PC-3 (cell line): ENCODE measurements at regions of chr13 and their contacts with region 1.

Region 1: DNA sequence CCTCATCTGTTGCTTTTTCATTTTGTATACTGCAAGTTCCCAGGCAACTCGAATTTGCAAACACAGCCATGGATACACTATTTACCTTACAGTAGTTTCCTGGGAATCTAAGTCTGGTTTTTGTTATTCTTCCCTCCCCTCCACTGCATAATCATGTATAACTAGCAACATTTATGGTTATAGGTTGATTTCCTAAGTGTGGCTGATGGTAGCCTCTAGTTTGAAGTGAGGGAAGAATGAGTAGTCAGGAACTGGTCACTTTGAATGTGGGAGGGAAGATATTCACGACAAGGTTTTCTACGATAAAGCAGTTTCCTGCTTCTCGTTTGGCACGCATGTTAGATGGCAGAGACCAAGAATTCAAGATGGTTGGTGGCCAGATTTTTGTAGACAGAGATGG is at the start of gene KCNRG:
- DNase-seq: no peak
- ATAC-seq: no peak
- H3K4me3 ChIP-seq: no peak within 1 kb of the TSS
- H3K27ac ChIP-seq: no peak within 1 kb of the TSS
- H3K4me1 ChIP-seq: no peaks in the 10 kb centered on the region
- H3K27me3 ChIP-seq: no peaks in the 10 kb centered on the region
- CTCF ChIP-seq: no peak
- total RNA-seq, gene KCNRG: 0.15 and 2.4 TPM in 2 replicates

Region 2: GRCh38 chr13:48050550-48050949 is 1964.7 kb before region 1 on chr13:
- CTCF ChIA-PET with region 1: no interaction called
- POLR2A ChIA-PET with region 1: no interaction called
- intact Hi-C with region 1: no loop called
- DNase-seq: no peak
- ATAC-seq: no peak
- H3K4me3 ChIP-seq: no peak overlapping the region
- H3K27ac ChIP-seq: no peak overlapping the region
- H3K4me1 ChIP-seq: no peaks in the 10 kb centered on the region
- H3K27me3 ChIP-seq: no peaks in the 10 kb centered on the region
- CTCF ChIP-seq: no peak

Region 3: DNA sequence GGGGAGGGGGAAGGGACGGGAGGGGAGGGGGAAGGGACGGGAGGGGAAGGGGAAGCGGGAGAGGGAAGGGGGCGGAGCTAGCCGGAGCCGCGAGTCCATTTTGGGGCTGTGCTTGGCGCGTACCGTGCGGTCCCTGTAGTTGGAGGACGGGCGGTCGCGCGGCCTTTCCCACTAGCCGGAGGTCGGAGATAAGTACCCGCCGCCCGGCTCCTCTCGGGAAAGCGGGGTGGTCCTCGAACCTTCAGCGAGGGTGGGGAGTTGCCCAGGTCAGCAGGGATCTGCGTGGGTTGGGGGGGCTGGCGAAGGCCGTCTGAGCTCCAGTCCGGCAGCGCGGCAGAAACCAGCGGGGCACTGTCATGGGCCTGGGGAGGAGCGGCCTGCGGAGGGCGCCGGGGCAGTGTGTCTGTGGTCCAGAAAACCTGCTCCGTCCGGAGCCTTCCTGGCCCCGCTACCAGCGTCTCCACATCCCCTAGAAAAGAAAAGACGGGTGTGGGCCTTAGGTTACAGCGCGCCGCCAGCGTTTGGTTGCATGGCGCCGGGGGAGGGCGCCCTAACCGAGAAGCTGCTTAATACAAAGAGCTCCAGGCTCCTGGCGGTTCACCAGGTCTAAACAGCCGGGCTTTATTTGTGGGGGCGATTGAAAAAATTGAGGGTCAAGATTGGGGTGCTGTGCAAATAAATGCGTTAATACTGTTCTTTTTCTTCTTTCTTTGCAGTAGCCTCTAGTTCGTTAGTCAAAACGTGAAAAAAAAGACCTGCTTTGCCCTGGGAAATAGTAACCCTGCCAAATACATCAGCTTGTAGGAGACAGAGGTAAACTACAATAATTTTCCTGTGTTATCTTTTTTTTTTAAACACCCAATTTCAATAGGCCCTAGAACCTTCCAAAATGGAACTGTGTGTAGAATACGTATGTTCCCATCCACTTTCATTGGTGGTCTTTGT is 18.0 kb before region 1 on chr13 and contains the start of gene TRIM13:
- CTCF ChIA-PET with region 1: interaction called, 4 read pairs
- POLR2A ChIA-PET with region 1: interaction called, 6 read pairs
- intact Hi-C with region 1: loop called (anchors 2 kb)
- DNase-seq: peak; percentile 79
- ATAC-seq: peak; percentile 80
- H3K4me3 ChIP-seq: peak within 1 kb of the TSS; percentile 95
- H3K27ac ChIP-seq: peak within 1 kb of the TSS; percentile 89
- H3K4me1 ChIP-seq: peaks cover 23% of the 10 kb centered on the region
- H3K27me3 ChIP-seq: no peaks in the 10 kb centered on the region
- CTCF ChIP-seq: peak; percentile 77
- total RNA-seq, gene TRIM13: 6.7 and 13.7 TPM in 2 replicates